Left ventricle myocardium inferior (tissue), 1 donor: ENCODE measurements at regions of chr16 and their contacts with region 1.

Region 1: DNA sequence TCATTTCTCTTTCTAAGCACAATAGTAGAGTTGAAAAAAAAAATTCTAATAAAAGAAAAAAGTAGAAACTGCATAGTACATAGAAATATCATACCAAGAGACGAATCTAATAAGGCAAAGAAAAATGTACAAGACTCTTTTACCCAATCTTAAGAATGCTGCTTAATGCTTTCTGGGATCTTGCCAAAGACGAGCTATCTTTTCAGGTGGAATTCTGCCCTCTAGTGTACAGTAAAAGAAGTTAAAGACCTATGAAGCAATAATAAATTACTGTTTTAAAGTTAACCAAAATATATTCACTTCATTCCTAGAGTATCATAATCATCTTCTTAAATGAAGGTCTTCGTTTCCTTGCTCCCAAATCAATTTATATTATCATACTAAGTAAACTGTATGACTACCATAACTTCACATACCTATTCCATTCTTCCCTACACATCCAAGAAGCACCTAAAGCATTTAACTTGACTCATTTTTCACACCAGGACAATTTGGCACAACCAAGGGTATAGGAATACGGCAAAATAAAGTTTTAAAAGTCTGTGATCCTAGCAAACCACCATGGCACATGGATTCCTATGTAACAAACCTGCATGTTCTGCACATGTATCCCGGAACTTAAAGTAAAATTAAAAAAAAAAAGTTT is 47.7 kb downstream of the CFDP1 start:
- DNase-seq: no peak
- H3K4me3 ChIP-seq: no peak overlapping the region
- H3K27ac ChIP-seq: no peak overlapping the region
- H3K4me1 ChIP-seq: peaks cover 43% of the 10 kb centered on the region
- H3K27me3 ChIP-seq: no peaks in the 10 kb centered on the region
- CTCF ChIP-seq: peak; percentile 81

Region 2: GRCh38 chr16:75234856-75235696 is 150.6 kb before region 1 on chr16:
- intact Hi-C with region 1: loop called (anchors 5 kb)
- DNase-seq: no peak
- H3K4me3 ChIP-seq: no peak overlapping the region
- H3K27ac ChIP-seq: peak overlapping the region; percentile 63
- H3K4me1 ChIP-seq: peaks cover 65% of the 10 kb centered on the region
- H3K27me3 ChIP-seq: no peaks in the 10 kb centered on the region
- CTCF ChIP-seq: no peak

Region 3: GRCh38 chr16:75621170-75621477 is 235.5 kb after region 1 on chr16:
- intact Hi-C with region 1: no loop called
- DNase-seq: no peak
- H3K4me3 ChIP-seq: no peak overlapping the region
- H3K27ac ChIP-seq: no peak overlapping the region
- H3K4me1 ChIP-seq: peaks cover 34% of the 10 kb centered on the region
- H3K27me3 ChIP-seq: no peaks in the 10 kb centered on the region
- CTCF ChIP-seq: peak; percentile 49